ENCODE measurements at regions of chr2 and their contacts with region 1.

Region 1: DNA sequence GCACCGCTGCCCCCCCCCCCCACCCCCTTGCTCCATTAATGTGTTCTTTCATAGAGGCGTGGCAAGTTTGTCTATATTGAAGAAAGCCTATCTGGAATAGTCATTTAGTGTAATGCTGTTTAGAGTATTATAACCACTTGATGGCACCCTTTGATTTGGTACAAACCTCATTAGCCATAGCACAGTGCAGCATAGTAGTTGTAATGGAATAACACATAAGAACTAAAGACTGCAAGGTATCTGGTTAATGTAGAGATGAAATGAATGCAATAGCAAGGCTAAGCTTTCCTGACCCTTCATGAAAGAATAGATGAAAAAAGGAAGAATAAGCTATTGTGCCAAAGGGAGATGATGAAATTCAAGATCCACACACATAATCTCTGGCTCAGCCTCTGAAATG is 81.9 kb downstream of the EHBP1 start:
- DNase-seq: no peak

Region 2: GRCh38 chr2:63023444-63023843 is 236.1 kb after region 1 on chr2:
- intact Hi-C with region 1: loop called (anchors 5 kb)
- DNase-seq: no peak

Region 3: GRCh38 chr2:63488118-63488713 is 700.8 kb after region 1 on chr2:
- intact Hi-C with region 1: loop called (anchors 5 kb)
- DNase-seq: no peak

Measured in cardiac septum (tissue), 1 donor.